ENCODE measurements at regions of chrX and their contacts with region 1.

Region 1: DNA sequence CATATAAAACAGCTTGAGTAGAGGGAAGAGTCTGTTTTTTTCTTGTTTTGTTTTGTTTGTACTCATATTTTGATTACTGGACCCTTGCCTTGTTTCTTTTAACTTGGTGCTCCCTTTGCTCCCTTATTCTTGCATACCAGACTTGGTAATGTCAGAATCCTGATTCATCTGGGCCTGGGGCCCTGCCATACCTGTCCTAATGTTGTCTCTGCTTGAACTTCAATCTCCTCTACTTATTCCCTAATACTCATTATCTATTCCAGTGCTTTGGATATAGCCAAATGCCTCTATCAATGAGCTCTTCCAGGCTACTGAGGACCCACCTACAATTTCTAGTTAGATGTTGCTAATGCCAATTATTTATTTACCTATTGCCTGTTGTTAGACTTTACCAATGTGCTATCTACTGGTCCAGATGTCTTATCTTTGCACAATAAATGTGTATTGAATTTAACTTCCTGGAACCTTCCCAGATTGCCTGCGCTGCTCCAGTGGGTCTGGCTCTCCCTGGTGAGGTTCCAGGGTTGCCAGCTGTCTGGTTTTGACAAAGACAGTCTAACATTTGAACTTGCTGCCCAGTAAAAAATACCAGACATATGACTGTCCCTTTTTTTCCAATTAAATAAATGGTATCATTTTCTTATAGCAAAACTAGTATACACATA is 64.4 kb upstream of the ACSL4 start:
- DNase-seq: no peak
- H3K4me3 Mint-ChIP-seq: no peak overlapping the region
- H3K27ac Mint-ChIP-seq: no peak overlapping the region
- H3K4me1 Mint-ChIP-seq: no peaks in the 10 kb centered on the region
- H3K27me3 Mint-ChIP-seq: peaks cover 1% of the 10 kb centered on the region

Region 2: GRCh38 chrX:109679820-109680219 is 117.6 kb before region 1 on chrX:
- CTCF ChIA-PET with region 1: no interaction called
- POLR2A ChIA-PET with region 1: interaction called, 10 read pairs
- DNase-seq: no peak
- H3K4me3 Mint-ChIP-seq: no peak overlapping the region
- H3K27ac Mint-ChIP-seq: no peak overlapping the region
- H3K4me1 Mint-ChIP-seq: no peaks in the 10 kb centered on the region
- H3K27me3 Mint-ChIP-seq: no peaks in the 10 kb centered on the region

Measured in activated CD4-positive, alpha-beta T cell treated with anti-CD3 and anti-CD28 coated beads, Interleukin-2, amount 10 ng/mL, durations not matched to agents 7 days and 5 days (primary cell).